Activated naive CD4-positive, alpha-beta T cell treated with anti-CD3 and anti-CD28 coated beads for 36 hours (primary cell): ENCODE measurements at regions of chr1 and their contacts with region 1.

Region 1: GRCh38 chr1:85707990-85708828 is at the start of gene ZNHIT6:
- DNase-seq: peak; percentile 93
- H3K4me3 Mint-ChIP-seq: no peak within 1 kb of the TSS
- H3K27ac Mint-ChIP-seq: no peak within 1 kb of the TSS
- H3K4me1 Mint-ChIP-seq: peaks cover 21% of the 10 kb centered on the region
- H3K27me3 Mint-ChIP-seq: no peaks in the 10 kb centered on the region
- total RNA-seq, gene ZNHIT6: 19.8 to 19.9 TPM

Region 2: GRCh38 chr1:84298328-84298683 is 1409.9 kb before region 1 on chr1:
- CTCF ChIA-PET with region 1: no interaction called
- intact Hi-C with region 1: loop called (anchors 10 kb)
- DNase-seq: peak; percentile 54
- H3K4me3 Mint-ChIP-seq: peak overlapping the region; percentile 81
- H3K27ac Mint-ChIP-seq: peak overlapping the region; percentile 28
- H3K4me1 Mint-ChIP-seq: peaks cover 35% of the 10 kb centered on the region
- H3K27me3 Mint-ChIP-seq: no peaks in the 10 kb centered on the region

Region 3: DNA sequence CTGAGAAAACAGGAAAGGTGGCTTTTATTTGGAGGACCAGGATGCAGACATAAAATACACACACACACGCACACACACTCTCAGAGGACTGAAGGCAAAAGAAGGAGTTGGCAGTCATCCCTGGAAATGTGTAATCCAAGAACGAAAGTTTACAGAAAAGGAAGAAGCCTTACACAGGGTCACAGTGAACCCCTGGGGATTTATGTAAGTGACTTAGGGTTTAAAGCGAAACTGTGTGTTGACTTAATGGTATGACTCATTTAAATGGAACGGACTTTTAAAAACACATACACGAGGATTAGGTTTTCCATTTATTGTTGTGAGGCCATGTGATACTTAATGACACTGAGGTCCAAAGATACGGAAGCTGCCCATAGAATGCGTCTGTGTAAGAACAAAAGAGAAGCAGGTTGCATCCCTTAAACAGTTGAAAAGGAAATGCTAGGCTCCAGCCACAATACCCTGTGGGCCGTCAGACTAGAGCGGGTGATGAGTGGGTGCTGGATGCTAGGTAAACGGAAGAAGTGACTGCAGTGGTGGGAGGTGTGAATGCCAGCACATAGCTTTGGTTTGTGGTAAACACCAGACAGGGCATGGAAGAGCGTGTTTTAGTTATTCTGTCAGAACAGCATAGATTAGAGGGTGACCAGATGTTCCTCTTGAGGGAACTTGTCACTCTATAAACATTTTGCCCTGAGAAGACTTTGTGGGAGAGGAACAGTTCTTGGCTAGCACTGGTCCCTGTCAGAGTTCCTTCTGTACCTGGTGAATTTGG is 410.2 kb before region 1 on chr1:
- CTCF ChIA-PET with region 1: no interaction called
- intact Hi-C with region 1: loop called (anchors 5 kb)
- DNase-seq: peak; percentile 83
- H3K4me3 Mint-ChIP-seq: peak overlapping the region; percentile 8
- H3K27ac Mint-ChIP-seq: peak overlapping the region; percentile 28
- H3K4me1 Mint-ChIP-seq: peaks cover 19% of the 10 kb centered on the region
- H3K27me3 Mint-ChIP-seq: peaks cover 8% of the 10 kb centered on the region

Region 4: GRCh38 chr1:85576642-85577418 is 131.4 kb before region 1 on chr1:
- CTCF ChIA-PET with region 1: no interaction called
- intact Hi-C with region 1: loop called (anchors 2 kb)
- DNase-seq: peak; percentile 74
- H3K4me3 Mint-ChIP-seq: peak overlapping the region; percentile 63
- H3K27ac Mint-ChIP-seq: no peak overlapping the region
- H3K4me1 Mint-ChIP-seq: peaks cover 25% of the 10 kb centered on the region
- H3K27me3 Mint-ChIP-seq: peaks cover 74% of the 10 kb centered on the region

Region 5: DNA sequence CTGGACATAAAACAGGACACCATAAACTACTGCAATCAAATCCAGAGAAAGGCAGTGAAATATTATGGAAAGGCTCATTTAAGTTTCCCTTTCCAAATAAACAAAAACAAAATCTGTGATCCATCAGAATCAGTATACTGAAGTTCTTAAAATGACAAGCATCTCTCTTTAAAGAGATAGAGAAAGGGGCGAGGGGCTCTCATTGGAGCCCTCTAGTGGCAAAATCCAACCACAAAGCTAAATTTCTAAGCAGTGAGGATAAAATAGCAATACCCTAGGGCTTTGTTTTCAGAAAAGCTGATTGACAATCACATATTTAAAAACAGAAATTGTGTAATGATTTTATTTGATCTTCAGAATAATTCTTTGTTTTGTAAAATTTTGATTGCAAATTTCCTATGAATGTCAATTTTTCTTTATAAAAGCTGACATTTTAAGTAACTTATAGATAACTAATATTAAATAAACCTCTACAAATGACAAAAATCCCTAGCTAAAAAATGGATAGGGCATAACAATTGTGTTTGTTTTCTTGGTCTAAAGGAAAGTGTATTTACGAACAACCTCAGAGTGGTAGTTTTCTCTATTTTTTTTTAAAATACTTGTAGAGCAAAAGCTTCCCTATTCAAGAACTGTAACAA is 310.2 kb after region 1 on chr1:
- CTCF ChIA-PET with region 1: no interaction called
- intact Hi-C with region 1: loop called (anchors 5 kb)
- DNase-seq: peak; percentile 13
- H3K4me3 Mint-ChIP-seq: no peak overlapping the region
- H3K27ac Mint-ChIP-seq: no peak overlapping the region
- H3K4me1 Mint-ChIP-seq: no peaks in the 10 kb centered on the region
- H3K27me3 Mint-ChIP-seq: no peaks in the 10 kb centered on the region